Heart right ventricle (tissue), 16 donors: ENCODE measurements at regions of chr21 and their contacts with region 1.

Region 1: GRCh38 chr21:16169102-16169511 is 439.3 kb downstream of the USP25 start:
- DNase-seq: no peak
- ATAC-seq: no peak
- H3K4me3 ChIP-seq: no peak overlapping the region
- H3K27ac ChIP-seq: no peak overlapping the region
- H3K4me1 ChIP-seq: no peaks in the 10 kb centered on the region
- H3K27me3 ChIP-seq: no peaks in the 10 kb centered on the region
- CTCF ChIP-seq: no peak

Region 2: GRCh38 chr21:16134134-16134533 is 35.0 kb before region 1 on chr21:
- intact Hi-C with region 1: loop called in 1 of 10 experiments (anchors 5 kb)
- DNase-seq: no peak
- ATAC-seq: no peak
- H3K4me3 ChIP-seq: no peak overlapping the region
- H3K27ac ChIP-seq: no peak overlapping the region
- H3K4me1 ChIP-seq: no peaks in the 10 kb centered on the region
- H3K27me3 ChIP-seq: peaks cover 0 to 3% (median 0%) of the 10 kb centered on the region in 7 donors
- CTCF ChIP-seq: no peak

Region 3: GRCh38 chr21:16342932-16343331 is 173.8 kb after region 1 on chr21:
- intact Hi-C with region 1: no loop called
- DNase-seq: no peak
- ATAC-seq: no peak
- H3K4me3 ChIP-seq: no peak overlapping the region
- H3K27ac ChIP-seq: no peak overlapping the region
- H3K4me1 ChIP-seq: no peaks in the 10 kb centered on the region
- H3K27me3 ChIP-seq: no peaks in the 10 kb centered on the region
- CTCF ChIP-seq: no peak

Region 4: GRCh38 chr21:17650292-17650691 is 1481.2 kb after region 1 on chr21:
- intact Hi-C with region 1: no loop called
- DNase-seq: no peak
- ATAC-seq: no peak
- H3K4me3 ChIP-seq: no peak overlapping the region
- H3K27ac ChIP-seq: no peak overlapping the region
- H3K4me1 ChIP-seq: no peaks in the 10 kb centered on the region
- H3K27me3 ChIP-seq: no peaks in the 10 kb centered on the region
- CTCF ChIP-seq: no peak